PC-3 (cell line): ENCODE measurements at regions of chr10 and their contacts with region 1.

Region 1: DNA sequence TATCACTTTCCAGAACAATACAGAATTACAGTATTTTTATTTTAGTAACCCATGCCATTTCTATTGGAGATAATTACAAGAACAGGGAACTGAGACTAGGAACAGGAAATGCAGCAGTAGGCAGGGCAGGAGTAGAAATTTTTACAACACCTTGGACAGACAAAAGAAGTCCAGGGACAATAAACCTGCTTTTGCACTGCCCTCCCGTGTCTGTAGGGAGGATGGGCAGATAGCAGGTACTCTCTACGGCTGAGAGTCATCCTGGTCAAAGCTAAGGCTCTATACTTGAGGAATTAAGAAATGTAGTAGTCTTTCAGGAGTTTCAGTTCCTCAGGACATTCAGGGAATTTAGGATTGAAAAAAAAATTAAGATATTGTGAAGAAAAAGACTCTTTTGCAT is 63.4 kb downstream of the VAX1 start:
- DNase-seq: peak; percentile 48
- ATAC-seq: peak; percentile 87
- H3K4me3 ChIP-seq: no peak overlapping the region
- H3K27ac ChIP-seq: no peak overlapping the region
- H3K4me1 ChIP-seq: peaks cover 13% of the 10 kb centered on the region
- H3K27me3 ChIP-seq: no peaks in the 10 kb centered on the region
- CTCF ChIP-seq: peak; percentile 50

Region 2: GRCh38 chr10:116796910-116797513 is 277.6 kb before region 1 on chr10:
- CTCF ChIA-PET with region 1: no interaction called
- POLR2A ChIA-PET with region 1: no interaction called
- intact Hi-C with region 1: loop called (anchors 1 kb)
- DNase-seq: peak; percentile 74
- ATAC-seq: peak; percentile 78
- H3K4me3 ChIP-seq: no peak overlapping the region
- H3K27ac ChIP-seq: no peak overlapping the region
- H3K4me1 ChIP-seq: no peaks in the 10 kb centered on the region
- H3K27me3 ChIP-seq: no peaks in the 10 kb centered on the region
- CTCF ChIP-seq: peak; percentile 89

Region 3: GRCh38 chr10:116836902-116837523 is 237.6 kb before region 1 on chr10:
- CTCF ChIA-PET with region 1: no interaction called
- POLR2A ChIA-PET with region 1: no interaction called
- intact Hi-C with region 1: loop called (anchors 1 kb)
- DNase-seq: no peak
- ATAC-seq: no peak
- H3K4me3 ChIP-seq: no peak overlapping the region
- H3K27ac ChIP-seq: no peak overlapping the region
- H3K4me1 ChIP-seq: no peaks in the 10 kb centered on the region
- H3K27me3 ChIP-seq: no peaks in the 10 kb centered on the region
- CTCF ChIP-seq: no peak

Region 4: GRCh38 chr10:116888380-116889055 is 186.1 kb before region 1 on chr10:
- CTCF ChIA-PET with region 1: no interaction called
- POLR2A ChIA-PET with region 1: no interaction called
- intact Hi-C with region 1: loop called (anchors 10 kb)
- DNase-seq: peak; percentile 82
- ATAC-seq: peak; percentile 83
- H3K4me3 ChIP-seq: no peak overlapping the region
- H3K27ac ChIP-seq: peak overlapping the region; percentile 80
- H3K4me1 ChIP-seq: peaks cover 62% of the 10 kb centered on the region
- H3K27me3 ChIP-seq: no peaks in the 10 kb centered on the region
- CTCF ChIP-seq: no peak

Region 5: DNA sequence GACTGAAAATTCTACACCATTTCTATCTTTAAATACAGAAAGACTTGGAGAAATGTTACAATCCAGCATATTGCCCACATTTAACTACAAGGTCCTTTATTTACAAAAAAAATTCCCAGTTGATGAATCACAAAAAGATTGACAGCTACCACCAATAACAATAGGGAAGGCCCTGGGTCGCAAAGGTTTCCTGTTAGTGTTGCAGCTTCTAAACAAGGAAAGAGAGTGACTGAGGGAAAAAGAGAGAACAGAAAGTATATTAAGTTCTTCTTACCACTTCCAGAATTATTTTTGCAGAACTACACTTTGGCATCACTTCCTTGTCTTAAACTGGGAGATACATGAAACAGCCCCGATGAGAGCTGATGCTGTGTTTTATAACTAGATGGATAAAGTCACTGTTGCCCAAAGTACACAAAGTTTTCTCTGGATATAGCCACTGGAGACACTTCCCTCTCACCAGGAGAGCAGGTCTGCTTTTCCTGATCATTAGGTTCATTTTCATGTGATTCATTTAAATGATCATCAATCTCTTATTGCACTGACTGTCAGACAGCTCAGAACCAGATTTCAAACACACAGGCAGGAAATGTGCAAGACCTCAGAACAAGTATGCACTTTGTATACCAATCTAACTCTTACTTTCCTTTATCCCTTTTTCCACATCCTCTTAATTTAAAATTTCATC is 126.6 kb before region 1 on chr10:
- CTCF ChIA-PET with region 1: no interaction called
- POLR2A ChIA-PET with region 1: no interaction called
- intact Hi-C with region 1: loop called (anchors 5 kb)
- DNase-seq: peak; percentile 81
- ATAC-seq: peak; percentile 86
- H3K4me3 ChIP-seq: peak overlapping the region; percentile 58
- H3K27ac ChIP-seq: peak overlapping the region; percentile 79
- H3K4me1 ChIP-seq: peaks cover 22% of the 10 kb centered on the region
- H3K27me3 ChIP-seq: no peaks in the 10 kb centered on the region
- CTCF ChIP-seq: no peak

Region 6: DNA sequence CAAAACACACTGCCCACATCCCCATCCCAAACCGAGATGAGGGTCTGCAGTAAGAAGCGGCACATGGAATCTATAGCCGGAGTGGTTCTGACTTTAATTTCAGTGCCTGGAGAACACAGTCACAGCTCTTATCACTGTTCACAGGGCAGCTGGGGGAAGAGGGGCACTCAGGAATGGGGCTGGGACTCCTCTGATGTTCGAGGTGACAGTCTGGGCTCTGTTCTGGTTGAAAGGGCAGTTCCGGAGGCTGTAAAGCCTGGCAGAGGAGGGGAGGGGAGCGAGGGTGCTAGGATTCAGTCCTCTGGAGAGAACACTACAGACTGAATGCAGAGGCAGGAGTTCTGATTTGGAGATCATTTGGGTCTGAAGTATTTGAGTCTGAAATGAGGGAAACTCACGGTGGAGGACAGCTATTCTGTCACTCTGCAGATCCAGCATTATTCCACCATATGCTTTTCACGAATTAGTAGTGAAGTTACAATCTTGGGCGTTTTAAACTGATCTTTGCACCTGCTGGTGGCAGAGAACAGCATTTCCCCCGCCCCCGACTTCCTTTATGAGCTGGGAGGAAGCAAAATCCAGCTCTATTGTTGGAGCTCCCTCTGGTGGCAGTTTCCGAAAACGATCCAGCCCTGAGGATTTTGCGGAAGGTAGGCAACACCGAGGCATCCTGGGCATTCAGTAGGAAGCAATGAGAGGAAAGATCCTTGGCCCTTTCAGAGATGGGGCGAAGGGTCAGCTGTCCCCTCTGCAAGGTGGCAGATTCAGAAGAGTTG is 100.0 kb after region 1 on chr10:
- CTCF ChIA-PET with region 1: no interaction called
- POLR2A ChIA-PET with region 1: no interaction called
- intact Hi-C with region 1: loop called (anchors 5 kb)
- DNase-seq: peak; percentile 92
- ATAC-seq: peak; percentile 81
- H3K4me3 ChIP-seq: peak overlapping the region; percentile 74
- H3K27ac ChIP-seq: no peak overlapping the region
- H3K4me1 ChIP-seq: no peaks in the 10 kb centered on the region
- H3K27me3 ChIP-seq: peaks cover 20% of the 10 kb centered on the region
- CTCF ChIP-seq: peak; percentile 78